ENCODE measurements at regions of chr11 and their contacts with region 1.

Region 1: GRCh38 chr11:72430741-72431570 is 3.4 kb downstream of the CLPB start:
- DNase-seq: peak; percentile 47
- H3K4me3 Mint-ChIP-seq: no peak overlapping the region
- H3K27ac Mint-ChIP-seq: peak overlapping the region; percentile 13
- H3K4me1 Mint-ChIP-seq: peaks cover 43% of the 10 kb centered on the region
- H3K27me3 Mint-ChIP-seq: no peaks in the 10 kb centered on the region

Region 2: DNA sequence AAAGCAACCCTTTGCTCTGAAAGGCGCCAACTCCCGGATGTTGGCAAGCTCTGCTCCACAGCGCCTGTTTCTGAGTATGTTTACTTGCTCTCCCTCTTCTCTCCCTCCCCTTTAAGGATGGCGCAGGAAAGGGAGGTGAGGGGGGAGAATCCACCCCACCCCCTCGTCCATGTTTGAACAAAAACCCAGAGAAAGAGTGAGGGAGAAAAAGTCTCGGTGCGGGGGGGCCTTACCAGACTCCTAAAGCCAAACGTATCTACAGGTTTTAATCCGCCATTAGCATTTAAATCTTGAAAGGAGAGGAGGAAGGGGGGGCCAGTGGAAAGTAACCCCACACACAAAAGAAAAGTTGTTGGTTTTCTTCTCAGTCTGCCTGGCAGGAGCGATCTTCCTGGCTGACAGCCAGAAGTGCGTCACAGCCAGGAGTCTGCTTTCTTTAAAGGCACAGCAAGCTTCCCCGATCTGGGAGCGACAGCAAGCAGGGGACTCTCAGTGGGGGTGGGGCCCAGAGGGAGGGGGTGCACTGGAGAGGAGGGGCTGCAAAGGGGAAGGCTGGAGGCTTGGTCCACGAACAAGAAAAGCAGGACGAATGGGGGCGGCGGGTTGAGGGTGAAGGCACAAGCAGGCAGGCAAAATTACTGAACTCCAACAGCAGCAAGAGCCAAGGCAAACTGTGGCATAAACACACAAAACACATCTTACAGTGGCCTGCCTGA is 390.1 kb before region 1 on chr11:
- CTCF ChIA-PET with region 1: interaction called, 10 read pairs
- POLR2A ChIA-PET with region 1: no interaction called
- DNase-seq: peak; percentile 70
- H3K4me3 Mint-ChIP-seq: no peak overlapping the region
- H3K27ac Mint-ChIP-seq: no peak overlapping the region
- H3K4me1 Mint-ChIP-seq: peaks cover 8% of the 10 kb centered on the region
- H3K27me3 Mint-ChIP-seq: no peaks in the 10 kb centered on the region

Region 3: GRCh38 chr11:72222907-72223614 is 207.9 kb before region 1 on chr11:
- CTCF ChIA-PET with region 1: interaction called, 11 read pairs
- POLR2A ChIA-PET with region 1: interaction called, 9 read pairs
- DNase-seq: peak; percentile 96
- H3K4me3 Mint-ChIP-seq: peak overlapping the region; percentile 87
- H3K27ac Mint-ChIP-seq: peak overlapping the region; percentile 82
- H3K4me1 Mint-ChIP-seq: peaks cover 34% of the 10 kb centered on the region
- H3K27me3 Mint-ChIP-seq: peaks cover 7% of the 10 kb centered on the region

Region 4: GRCh38 chr11:72413914-72414628 is 16.9 kb before region 1 on chr11:
- CTCF ChIA-PET with region 1: interaction called, 50 read pairs
- POLR2A ChIA-PET with region 1: no interaction called
- DNase-seq: peak; percentile 80
- H3K4me3 Mint-ChIP-seq: no peak overlapping the region
- H3K27ac Mint-ChIP-seq: no peak overlapping the region
- H3K4me1 Mint-ChIP-seq: peaks cover 16% of the 10 kb centered on the region
- H3K27me3 Mint-ChIP-seq: no peaks in the 10 kb centered on the region

Region 5: GRCh38 chr11:72454791-72455190 is 23.8 kb after region 1 on chr11:
- CTCF ChIA-PET with region 1: interaction called, 11 read pairs
- POLR2A ChIA-PET with region 1: no interaction called
- DNase-seq: no peak
- H3K4me3 Mint-ChIP-seq: no peak overlapping the region
- H3K27ac Mint-ChIP-seq: no peak overlapping the region
- H3K4me1 Mint-ChIP-seq: no peaks in the 10 kb centered on the region
- H3K27me3 Mint-ChIP-seq: peaks cover 10% of the 10 kb centered on the region

Measured in activated CD4-positive, alpha-beta memory T cell treated with anti-CD3 and anti-CD28 coated beads, Interleukin-2, amount 10 ng/mL, durations not matched to agents 7 days and 5 days (primary cell).